AG04449 (cell line): ENCODE measurements at regions of chr17 and their contacts with region 1.

Region 1: GRCh38 chr17:81871387-81872230 is 472 bp upstream of the ARHGDIA start:
- DNase-seq: no peak
- H3K4me3 ChIP-seq: peak overlapping the region; percentile 81
- CTCF ChIP-seq: peak; percentile 43

Region 2: GRCh38 chr17:81733507-81734404 is 137.9 kb before region 1 on chr17:
- CTCF ChIA-PET with region 1: interaction called, 13 read pairs
- POLR2A ChIA-PET with region 1: interaction called, 3 read pairs
- DNase-seq: no peak
- H3K4me3 ChIP-seq: no peak overlapping the region
- CTCF ChIP-seq: peak; percentile 97

Region 3: DNA sequence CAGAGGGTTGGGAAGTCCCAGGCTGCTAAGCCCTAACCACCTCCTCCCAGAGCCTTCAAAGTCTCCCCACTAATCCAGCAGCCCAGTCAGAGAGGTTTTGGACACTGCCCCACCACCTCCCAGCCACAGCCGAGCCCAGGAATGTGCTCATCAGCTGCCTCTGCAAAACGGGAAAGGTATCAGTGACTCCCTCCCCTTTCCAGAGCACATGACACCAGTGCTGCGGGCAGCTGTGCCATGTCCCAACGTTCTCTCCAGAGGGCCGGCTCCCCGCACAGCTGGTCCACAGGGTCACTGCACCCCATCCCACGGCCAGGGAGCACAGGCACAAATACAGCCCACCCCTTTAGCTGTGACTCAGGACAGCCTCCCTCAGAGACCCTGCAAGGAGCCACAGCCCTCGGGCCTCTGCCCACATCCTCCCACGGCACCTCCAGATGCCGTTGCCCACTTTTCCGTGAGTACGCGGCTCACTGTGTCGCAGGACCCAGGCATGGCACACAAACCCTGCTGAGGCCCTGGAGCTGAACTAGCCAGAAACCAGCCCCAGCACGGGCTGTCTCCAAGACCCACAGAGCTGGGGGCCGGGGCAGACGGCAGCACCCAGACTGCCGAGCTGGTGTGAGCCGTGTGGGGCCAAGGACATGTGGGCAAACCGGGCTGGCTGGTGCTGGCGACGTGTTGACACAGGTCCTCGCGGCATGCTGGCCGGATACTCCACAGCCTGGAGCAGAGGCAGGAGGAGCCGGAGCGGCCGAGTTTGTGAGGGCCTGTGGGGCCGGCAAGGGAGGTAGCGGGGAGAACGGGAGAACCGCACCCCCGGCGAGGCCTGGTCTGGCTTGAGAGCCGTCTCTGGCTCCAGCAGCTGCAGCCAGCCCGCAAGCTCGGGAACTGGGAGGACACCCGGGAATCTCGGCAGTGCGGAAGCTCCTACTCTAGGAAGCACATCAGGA is 30.5 kb before region 1 on chr17:
- CTCF ChIA-PET with region 1: no interaction called
- POLR2A ChIA-PET with region 1: no interaction called
- DNase-seq: no peak
- H3K4me3 ChIP-seq: no peak overlapping the region
- CTCF ChIP-seq: no peak

Region 4: DNA sequence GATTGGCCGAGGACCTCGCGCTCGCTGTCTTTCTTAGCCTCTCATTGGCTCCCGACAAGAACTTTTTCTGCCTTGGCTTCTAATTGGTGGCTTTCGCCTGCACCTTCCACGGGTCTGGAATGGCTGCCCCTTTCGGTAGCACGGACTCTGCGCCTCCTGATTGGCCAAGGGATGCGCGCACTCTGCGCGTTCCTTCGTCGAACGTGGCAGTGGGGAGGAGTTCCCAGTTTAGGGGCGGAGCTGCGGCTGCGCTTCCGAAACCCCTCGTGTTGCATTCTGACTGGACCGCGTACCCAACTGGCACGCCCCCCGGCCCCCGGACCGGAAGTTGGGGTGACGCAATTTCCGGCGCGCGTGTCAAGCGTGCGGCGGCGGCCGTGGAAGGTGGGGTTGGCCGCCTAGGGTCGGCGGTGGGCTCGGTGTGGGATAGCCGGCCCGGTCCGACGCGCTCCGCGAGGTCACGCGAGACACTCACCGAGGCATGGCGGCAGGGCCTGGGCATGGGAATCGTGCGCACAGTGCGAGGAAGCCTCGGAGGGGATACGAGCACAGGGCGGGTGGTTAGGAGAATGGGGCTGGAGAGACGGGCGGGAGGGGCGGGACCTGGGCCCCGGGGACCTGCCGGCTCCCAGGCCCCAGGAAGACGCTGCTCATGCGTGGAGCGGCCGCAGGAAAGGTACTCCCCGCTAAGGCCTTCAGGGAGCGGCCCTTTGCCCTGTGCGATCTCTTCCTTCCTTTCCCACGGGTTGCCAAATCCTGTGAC is 10.7 kb before region 1 on chr17:
- CTCF ChIA-PET with region 1: interaction called, 5 read pairs
- POLR2A ChIA-PET with region 1: interaction called, 28 read pairs
- DNase-seq: peak; percentile 100
- H3K4me3 ChIP-seq: peak overlapping the region; percentile 67
- CTCF ChIP-seq: no peak